MCF 10A (cell line): ENCODE measurements at regions of chr6 and their contacts with region 1.

Region 1: GRCh38 chr6:101393251-101393828 is at the start of gene GRIK2:
- DNase-seq: peak; percentile 59
- H3K4me3 Mint-ChIP-seq: peak within 1 kb of the TSS; percentile 82
- H3K27ac Mint-ChIP-seq: no peak within 1 kb of the TSS
- H3K4me1 Mint-ChIP-seq: peaks cover 13% of the 10 kb centered on the region
- H3K27me3 Mint-ChIP-seq: no peaks in the 10 kb centered on the region
- CTCF ChIP-seq: peak; percentile 49
- total RNA-seq, gene GRIK2: 0.89 and 2.5 TPM in 2 replicates

Region 2: DNA sequence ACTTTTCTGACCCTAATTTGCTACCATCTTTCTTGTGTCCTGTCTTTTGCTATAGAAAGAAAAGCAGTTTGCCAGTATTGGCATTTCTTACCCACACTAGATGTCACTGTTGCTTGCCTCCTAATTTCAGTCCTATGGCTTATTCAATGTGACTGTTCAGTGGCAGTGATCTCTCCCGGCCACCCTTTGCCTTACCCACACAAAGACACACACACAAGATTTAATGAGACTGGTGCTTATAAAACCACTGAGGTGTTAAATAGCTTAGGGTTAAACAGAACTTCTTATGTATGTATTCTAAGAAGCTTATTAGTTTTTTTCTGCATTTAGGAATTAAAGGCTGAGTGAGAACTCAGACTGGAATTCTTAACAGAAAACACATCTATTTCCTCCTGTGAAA is 278.6 kb before region 1 on chr6:
- CTCF ChIA-PET with region 1: interaction called, 4 read pairs
- POLR2A ChIA-PET with region 1: no interaction called
- intact Hi-C with region 1: loop called (anchors 1 kb)
- DNase-seq: peak; percentile 60
- H3K4me3 Mint-ChIP-seq: no peak overlapping the region
- H3K27ac Mint-ChIP-seq: no peak overlapping the region
- H3K4me1 Mint-ChIP-seq: no peaks in the 10 kb centered on the region
- H3K27me3 Mint-ChIP-seq: no peaks in the 10 kb centered on the region
- CTCF ChIP-seq: peak; percentile 48

Region 3: GRCh38 chr6:101760843-101761621 is 367.7 kb after region 1 on chr6:
- CTCF ChIA-PET with region 1: no interaction called
- POLR2A ChIA-PET with region 1: no interaction called
- intact Hi-C with region 1: loop called (anchors 10 kb)
- DNase-seq: peak; percentile 95
- H3K4me3 Mint-ChIP-seq: peak overlapping the region; percentile 14
- H3K27ac Mint-ChIP-seq: peak overlapping the region; percentile 73
- H3K4me1 Mint-ChIP-seq: peaks cover 15% of the 10 kb centered on the region
- H3K27me3 Mint-ChIP-seq: no peaks in the 10 kb centered on the region
- CTCF ChIP-seq: no peak

Region 4: DNA sequence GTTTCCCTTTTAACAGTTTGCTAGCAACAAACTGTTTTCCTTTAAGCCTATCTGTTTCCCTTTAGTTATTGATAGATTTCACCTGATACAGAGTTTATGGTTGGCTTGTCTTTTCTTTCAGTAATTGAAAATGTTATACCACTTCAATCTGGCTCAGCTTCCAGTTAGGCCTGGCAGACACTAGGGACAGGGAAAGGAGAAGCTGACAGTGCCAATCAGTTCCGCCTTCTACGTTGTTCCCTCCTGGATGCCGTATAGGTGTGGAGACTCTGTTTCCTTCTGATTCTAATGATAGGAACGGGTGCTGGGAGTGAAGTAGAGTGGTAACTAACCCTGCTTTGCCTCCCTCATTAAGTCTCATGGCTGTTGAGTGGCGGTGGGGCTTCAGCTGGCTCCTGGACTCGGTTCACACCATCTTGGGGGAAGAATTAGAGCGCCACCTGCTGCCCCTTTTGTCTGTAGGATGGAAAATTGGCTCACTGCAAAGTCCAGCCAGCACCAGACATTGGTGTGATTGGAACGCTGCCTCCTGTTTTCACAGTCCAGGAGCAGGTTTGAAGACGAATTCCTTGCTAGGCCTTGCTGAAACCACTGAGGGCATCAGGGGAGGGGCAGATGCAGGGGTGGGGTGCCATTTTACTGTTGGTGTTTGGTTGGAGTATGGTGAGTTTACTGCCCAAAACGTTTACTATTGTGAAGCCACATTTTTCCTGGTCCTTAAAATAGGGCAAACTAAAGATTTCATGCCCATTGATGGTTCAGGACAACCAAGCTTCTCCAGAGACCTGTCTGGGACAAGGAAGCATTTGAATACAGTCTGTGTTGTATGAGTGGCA is 1729.6 kb after region 1 on chr6:
- CTCF ChIA-PET with region 1: interaction called, 6 read pairs
- POLR2A ChIA-PET with region 1: no interaction called
- intact Hi-C with region 1: loop called (anchors 2 kb)
- DNase-seq: peak; percentile 76
- H3K4me3 Mint-ChIP-seq: no peak overlapping the region
- H3K27ac Mint-ChIP-seq: no peak overlapping the region
- H3K4me1 Mint-ChIP-seq: peaks cover 12% of the 10 kb centered on the region
- H3K27me3 Mint-ChIP-seq: no peaks in the 10 kb centered on the region
- CTCF ChIP-seq: peak; percentile 75